Panc1 (cell line): ENCODE measurements at regions of chr2 and their contacts with region 1.

Region 1: GRCh38 chr2:260507-261161 is 3.2 kb downstream of the SH3YL1 start:
- DNase-seq: no peak
- ATAC-seq: no peak
- H3K4me3 ChIP-seq: no peak overlapping the region
- H3K27ac ChIP-seq: no peak overlapping the region
- H3K4me1 ChIP-seq: peaks cover 5% of the 10 kb centered on the region; the same call in 1 of the 2 replicates
- H3K27me3 ChIP-seq: no peaks in the 10 kb centered on the region
- CTCF ChIP-seq: no peak

Region 2: GRCh38 chr2:84121-84520 is 176.5 kb before region 1 on chr2:
- CTCF ChIA-PET with region 1: no interaction called
- POLR2A ChIA-PET with region 1: no interaction called
- in situ Hi-C with region 1: no loop called
- intact Hi-C with region 1: no loop called
- DNase-seq: no peak
- ATAC-seq: no peak
- H3K4me3 ChIP-seq: no peak overlapping the region
- H3K27ac ChIP-seq: no peak overlapping the region
- H3K4me1 ChIP-seq: no peaks in the 10 kb centered on the region
- H3K27me3 ChIP-seq: no peaks in the 10 kb centered on the region; the same call in 1 of the 2 replicates
- CTCF ChIP-seq: no peak

Region 3: GRCh38 chr2:246489-247144 is 14.0 kb before region 1 on chr2:
- CTCF ChIA-PET with region 1: interaction called, 10 read pairs
- POLR2A ChIA-PET with region 1: no interaction called
- in situ Hi-C with region 1: no loop called
- intact Hi-C with region 1: no loop called
- DNase-seq: peak; percentile 7
- ATAC-seq: peak; percentile 74; the same call in 1 of the 2 replicates
- H3K4me3 ChIP-seq: no peak overlapping the region
- H3K27ac ChIP-seq: no peak overlapping the region
- H3K4me1 ChIP-seq: no peaks in the 10 kb centered on the region
- H3K27me3 ChIP-seq: no peaks in the 10 kb centered on the region
- CTCF ChIP-seq: peak; percentile 74

Region 4: DNA sequence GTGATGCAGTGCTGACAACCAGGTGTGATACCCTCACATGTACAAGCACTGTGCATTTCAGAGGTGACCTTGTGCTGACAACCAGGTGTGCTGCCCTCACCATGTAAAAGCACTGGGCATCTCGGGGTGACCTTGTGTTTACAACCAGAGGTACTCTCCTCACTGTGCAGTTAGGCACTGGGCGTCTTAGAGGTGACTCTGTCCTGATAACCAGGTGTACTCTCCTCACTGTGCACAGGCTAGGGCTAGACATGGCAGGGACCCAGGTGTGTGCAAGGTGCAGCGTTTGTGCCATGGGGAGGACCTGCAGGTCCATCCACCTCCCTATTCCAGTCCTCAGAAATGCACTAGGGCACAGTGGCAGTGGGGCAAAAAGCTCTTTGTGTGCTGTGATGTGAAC is 35.7 kb after region 1 on chr2:
- CTCF ChIA-PET with region 1: no interaction called
- POLR2A ChIA-PET with region 1: no interaction called
- in situ Hi-C with region 1: no loop called
- intact Hi-C with region 1: no loop called
- DNase-seq: no peak
- ATAC-seq: no peak
- H3K4me3 ChIP-seq: no peak overlapping the region
- H3K27ac ChIP-seq: no peak overlapping the region
- H3K4me1 ChIP-seq: no peaks in the 10 kb centered on the region
- H3K27me3 ChIP-seq: peaks cover 7% of the 10 kb centered on the region
- CTCF ChIP-seq: no peak

Region 5: DNA sequence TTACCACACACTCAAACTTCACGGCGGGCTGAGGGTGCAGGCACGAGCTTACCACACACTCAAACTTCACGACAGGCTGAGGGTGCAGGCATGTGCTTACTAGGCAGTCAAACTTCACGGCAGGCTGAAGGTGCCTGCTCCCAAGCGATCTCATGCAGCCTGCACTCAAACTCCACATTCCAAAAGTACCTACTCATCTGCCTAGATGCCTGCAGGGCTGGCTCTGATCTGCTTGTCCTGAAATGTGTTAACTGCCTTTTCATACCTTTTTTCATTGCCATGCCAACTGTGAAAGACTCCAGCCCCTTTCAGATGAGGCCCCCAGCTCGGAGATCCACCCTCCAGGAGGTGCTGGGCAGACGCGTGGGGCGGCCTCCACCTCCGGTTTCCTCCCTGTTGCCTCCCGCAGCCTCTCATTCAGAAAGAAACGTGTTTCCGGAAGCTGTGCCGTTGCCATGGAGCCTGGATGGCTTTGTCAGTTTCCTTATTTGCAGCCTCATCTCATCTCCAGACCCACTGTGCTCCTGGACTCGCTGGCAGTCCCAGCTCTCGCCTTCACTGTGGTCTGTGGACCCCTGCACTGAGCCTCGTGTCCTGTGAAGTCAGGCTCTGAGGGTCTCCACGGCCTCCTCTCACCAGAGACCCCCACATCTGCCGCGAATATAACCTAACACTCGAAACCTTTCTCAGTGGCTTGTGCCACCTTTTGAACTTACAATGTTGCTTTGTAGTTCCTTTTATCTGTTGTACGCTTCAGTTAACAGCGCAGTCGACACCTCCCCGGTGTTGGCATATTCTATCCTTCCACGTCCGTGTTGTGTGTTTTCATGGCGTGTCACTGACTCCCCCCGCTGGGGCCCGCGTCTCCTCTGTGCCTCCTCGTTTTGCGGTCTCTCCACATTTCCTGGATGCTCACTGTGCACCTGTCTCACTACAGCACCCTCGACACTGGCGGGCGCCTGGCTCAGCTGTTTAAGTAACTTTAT is 133.4 kb after region 1 on chr2:
- CTCF ChIA-PET with region 1: no interaction called
- POLR2A ChIA-PET with region 1: no interaction called
- in situ Hi-C with region 1: no loop called
- intact Hi-C with region 1: no loop called
- DNase-seq: no peak
- ATAC-seq: peak; percentile 92
- H3K4me3 ChIP-seq: no peak overlapping the region
- H3K27ac ChIP-seq: no peak overlapping the region
- H3K4me1 ChIP-seq: peaks cover 7% of the 10 kb centered on the region; the same call in 1 of the 2 replicates
- H3K27me3 ChIP-seq: no peaks in the 10 kb centered on the region
- CTCF ChIP-seq: no peak